Psoas muscle (tissue), 8 donors: ENCODE measurements at regions of chr7 and their contacts with region 1.

Region 1: DNA sequence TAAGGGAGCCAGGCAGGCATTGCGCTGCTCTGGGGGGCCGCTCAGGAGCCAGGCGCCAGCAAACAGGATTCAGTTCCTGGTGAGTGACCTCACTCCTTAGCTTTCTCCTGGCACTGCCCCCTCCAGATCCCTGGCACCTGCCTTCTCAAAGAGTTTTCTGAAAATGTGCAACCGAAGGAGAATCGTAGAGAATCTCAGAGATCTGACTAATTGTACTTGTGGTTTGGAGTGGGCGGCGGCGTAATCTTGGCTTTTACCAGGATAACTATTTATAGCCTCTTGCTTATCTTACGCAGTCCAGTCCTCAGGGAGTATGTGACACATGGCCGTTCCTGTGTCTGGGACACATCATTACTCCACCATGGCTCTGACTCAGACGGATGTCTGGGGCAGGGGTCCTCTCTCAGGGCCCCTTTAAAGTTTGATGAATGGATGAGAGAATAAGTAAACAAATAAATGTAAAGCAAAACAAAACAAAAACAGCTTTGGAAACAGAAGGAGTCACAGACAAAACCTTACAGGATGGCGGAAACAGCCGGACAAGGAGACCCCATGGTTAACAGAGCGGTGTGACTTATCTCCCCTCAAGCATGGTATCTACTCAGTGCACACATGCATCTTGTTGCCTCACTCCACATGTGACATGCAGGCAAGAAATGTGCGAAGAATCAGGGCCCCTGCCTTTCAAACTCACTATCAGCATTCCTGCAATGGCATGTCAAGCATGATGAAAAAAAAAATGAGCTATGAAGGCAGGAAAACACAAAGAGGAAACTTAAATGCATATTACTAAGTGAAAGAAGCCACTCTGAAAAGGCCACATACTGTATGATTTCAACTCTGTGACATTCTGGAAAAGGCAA is 99.7 kb downstream of the TNS3 start:
- DNase-seq: peak in 1 of 2 donors; percentile 70
- ATAC-seq: peak; percentile 86 to 93 (median 90)
- H3K4me3 ChIP-seq: no peak overlapping the region
- H3K27ac ChIP-seq: peak overlapping the region; percentile 84
- H3K4me1 ChIP-seq: peaks cover 36% of the 10 kb centered on the region
- H3K27me3 ChIP-seq: no peaks in the 10 kb centered on the region
- CTCF ChIP-seq: no peak

Region 2: GRCh38 chr7:47581806-47582763 is 99.8 kb after region 1 on chr7 and contains the start of gene TNS3:
- intact Hi-C with region 1: loop called in 1 of 2 experiments (anchors 5 kb)
- DNase-seq: peak; percentile 58 to 65
- ATAC-seq: peak; percentile 63 to 81 (median 74)
- H3K4me3 ChIP-seq: peak within 1 kb of the TSS; percentile 73
- H3K27ac ChIP-seq: peak within 1 kb of the TSS; percentile 21
- H3K4me1 ChIP-seq: peaks cover 17% of the 10 kb centered on the region
- H3K27me3 ChIP-seq: no peaks in the 10 kb centered on the region
- CTCF ChIP-seq: peak; percentile 25
- total RNA-seq, gene TNS3: 35.0 to 75.3 (median 45.6) TPM

Region 3: GRCh38 chr7:47763063-47763974 is 281.1 kb after region 1 on chr7:
- intact Hi-C with region 1: no loop called
- DNase-seq: no peak
- ATAC-seq: peak in 1 of 4 donors; percentile 37
- H3K4me3 ChIP-seq: no peak overlapping the region
- H3K27ac ChIP-seq: no peak overlapping the region
- H3K4me1 ChIP-seq: peaks cover 2% of the 10 kb centered on the region
- H3K27me3 ChIP-seq: no peaks in the 10 kb centered on the region
- CTCF ChIP-seq: no peak